ENCODE measurements at regions of chr16 and their contacts with region 1.

Region 1: GRCh38 chr16:48353565-48354163 is 31.5 kb downstream of the SIAH1 start:
- DNase-seq: peak; percentile 64
- ATAC-seq: peak; percentile 92
- H3K4me3 ChIP-seq: no peak overlapping the region
- H3K27ac ChIP-seq: no peak overlapping the region
- H3K4me1 ChIP-seq: no peaks in the 10 kb centered on the region
- H3K27me3 ChIP-seq: no peaks in the 10 kb centered on the region
- CTCF ChIP-seq: peak; percentile 87

Region 2: GRCh38 chr16:48091117-48091516 is 262.5 kb before region 1 on chr16:
- intact Hi-C with region 1: no loop called
- DNase-seq: no peak
- ATAC-seq: no peak
- H3K4me3 ChIP-seq: no peak overlapping the region
- H3K27ac ChIP-seq: no peak overlapping the region
- H3K4me1 ChIP-seq: no peaks in the 10 kb centered on the region
- H3K27me3 ChIP-seq: no peaks in the 10 kb centered on the region
- CTCF ChIP-seq: no peak

Region 3: GRCh38 chr16:48247311-48247710 is 106.4 kb before region 1 on chr16 and contains the start of gene ABCC11:
- intact Hi-C with region 1: no loop called
- DNase-seq: no peak
- ATAC-seq: no peak
- H3K4me3 ChIP-seq: no peak within 1 kb of the TSS
- H3K27ac ChIP-seq: no peak within 1 kb of the TSS
- H3K4me1 ChIP-seq: peaks cover 56% of the 10 kb centered on the region
- H3K27me3 ChIP-seq: no peaks in the 10 kb centered on the region
- CTCF ChIP-seq: no peak
- total RNA-seq, gene ABCC11: not detected

Region 4: DNA sequence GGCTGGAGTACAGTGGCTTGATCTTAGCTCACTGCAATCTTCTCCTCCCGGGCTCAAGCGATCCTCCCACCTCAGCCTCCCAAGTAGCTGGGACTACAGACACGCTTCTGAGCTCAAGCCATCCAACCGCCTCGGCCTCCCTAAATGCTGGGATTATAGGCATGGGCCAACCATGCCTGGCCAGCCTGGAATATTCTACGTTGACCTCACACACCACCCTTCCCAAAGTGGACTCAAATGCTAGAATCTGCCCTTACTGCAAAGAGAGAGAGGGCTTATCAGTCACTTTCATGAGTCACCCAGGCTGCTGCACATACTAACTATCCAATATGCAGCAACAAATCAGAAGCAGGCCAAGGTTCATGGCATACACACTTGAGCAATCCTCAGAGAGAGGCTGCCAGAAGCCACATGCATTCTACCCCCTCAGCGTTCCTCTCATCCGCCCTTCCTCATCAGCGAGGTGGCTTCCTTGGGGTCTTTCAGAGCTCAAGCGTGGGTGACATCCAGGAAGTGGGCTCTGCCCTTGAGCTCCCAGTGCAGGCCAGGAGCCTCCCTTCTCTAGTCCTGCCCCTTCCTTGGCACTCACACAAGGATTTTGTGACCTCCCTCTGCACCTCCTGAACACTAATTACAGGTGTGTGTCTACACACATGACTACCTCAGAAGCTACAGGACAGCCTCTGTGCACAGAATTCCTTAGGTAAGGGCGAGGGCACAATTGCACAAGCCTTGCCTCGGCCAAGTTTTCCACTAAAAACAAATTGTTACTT is 56.4 kb after region 1 on chr16:
- intact Hi-C with region 1: no loop called
- DNase-seq: peak; percentile 49
- ATAC-seq: peak; percentile 77 to 78
- H3K4me3 ChIP-seq: no peak overlapping the region
- H3K27ac ChIP-seq: no peak overlapping the region
- H3K4me1 ChIP-seq: peaks cover 8% of the 10 kb centered on the region
- H3K27me3 ChIP-seq: no peaks in the 10 kb centered on the region
- CTCF ChIP-seq: no peak

Region 5: DNA sequence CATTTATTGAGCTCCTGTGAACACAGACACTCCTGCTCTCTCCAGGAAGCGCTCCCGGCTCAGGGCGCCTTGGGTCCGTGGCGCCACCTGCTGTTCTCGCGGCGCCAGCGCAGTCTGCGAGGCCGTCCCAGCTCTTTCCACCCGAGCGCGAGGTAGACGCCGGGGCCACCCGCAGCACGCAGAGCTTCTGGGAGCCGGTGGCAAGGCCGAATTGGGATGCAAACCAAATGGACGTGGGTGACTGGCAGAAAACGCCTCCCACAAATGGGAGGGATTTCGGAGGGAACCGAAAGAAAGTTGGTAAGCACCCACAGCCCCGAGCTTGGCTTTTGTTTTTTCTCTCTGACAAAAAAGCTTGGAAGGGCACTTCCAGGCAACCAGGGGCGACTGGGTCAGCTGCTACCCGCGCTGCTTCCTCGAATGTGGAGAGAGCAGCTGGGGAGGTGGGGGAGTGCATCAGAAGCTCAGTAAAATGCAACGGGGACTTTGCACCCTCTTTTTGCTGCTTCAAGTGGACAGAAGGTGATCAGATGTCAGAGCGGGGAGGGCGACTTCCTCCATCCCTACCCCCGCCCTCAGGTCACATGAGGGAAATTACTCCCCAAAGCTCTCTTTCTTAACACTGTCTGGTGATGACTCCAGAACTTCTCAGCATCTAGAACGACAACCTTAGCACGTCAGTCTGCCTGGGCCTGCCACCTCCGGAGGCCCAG is 269.8 kb after region 1 on chr16:
- intact Hi-C with region 1: loop called (anchors 10 kb)
- DNase-seq: peak; percentile 92
- ATAC-seq: peak; percentile 97 to 98
- H3K4me3 ChIP-seq: peak overlapping the region; percentile 56
- H3K27ac ChIP-seq: peak overlapping the region; percentile 76
- H3K4me1 ChIP-seq: peaks cover 45% of the 10 kb centered on the region
- H3K27me3 ChIP-seq: no peaks in the 10 kb centered on the region
- CTCF ChIP-seq: peak; percentile 99

Measured in lower lobe of right lung (tissue), 2 donors.